Posterior cingulate gyrus (tissue), 11 donors: ENCODE measurements at regions of chr6 and their contacts with region 1.

Region 1: GRCh38 chr6:100116411-100117194 is 122.6 kb upstream of the MCHR2 start:
- DNase-seq: peak in 3 of 10 donors; percentile 41 to 47 (median 44)

Region 2: DNA sequence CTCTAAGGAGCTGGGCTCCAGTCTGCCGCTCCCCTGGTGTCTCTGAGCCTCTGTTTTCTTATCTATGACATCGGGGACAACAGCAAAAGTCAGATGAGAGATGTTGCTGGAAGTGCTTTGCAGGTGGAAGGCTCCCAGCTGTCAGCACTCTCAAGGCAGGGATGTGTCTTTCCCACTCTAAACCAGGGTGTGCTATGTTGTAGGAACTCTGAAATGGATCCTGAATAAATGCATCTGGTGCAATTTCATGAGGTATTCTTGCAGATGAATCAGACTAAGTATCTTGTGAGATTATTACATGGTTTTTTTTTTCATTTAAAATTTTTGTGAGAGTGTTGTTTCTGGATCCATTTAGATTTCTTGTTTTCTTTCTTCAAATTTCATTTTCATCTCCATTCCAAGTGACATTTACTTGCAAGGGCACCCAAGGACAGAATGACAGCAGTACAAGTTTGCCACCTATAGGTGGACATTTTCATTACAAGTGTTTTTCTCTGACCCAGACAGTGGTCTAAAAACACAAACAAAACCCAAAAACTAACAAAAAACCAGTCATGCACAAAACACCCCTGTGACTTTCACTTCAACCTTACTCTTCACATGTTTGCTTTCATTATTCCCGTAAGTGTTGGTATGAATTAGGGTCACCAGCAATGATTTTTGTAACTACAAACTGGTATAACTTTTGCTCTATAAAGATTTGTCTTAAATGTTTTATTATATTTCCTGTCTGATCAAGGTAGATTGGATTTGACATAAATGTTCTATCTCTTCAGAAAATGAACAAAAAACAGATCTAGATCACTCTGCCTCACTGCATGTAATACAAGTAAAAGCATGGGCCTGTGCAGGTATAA is 362.8 kb after region 1 on chr6:
- intact Hi-C with region 1: loop called (anchors 5 kb)
- DNase-seq: no peak

Region 3: DNA sequence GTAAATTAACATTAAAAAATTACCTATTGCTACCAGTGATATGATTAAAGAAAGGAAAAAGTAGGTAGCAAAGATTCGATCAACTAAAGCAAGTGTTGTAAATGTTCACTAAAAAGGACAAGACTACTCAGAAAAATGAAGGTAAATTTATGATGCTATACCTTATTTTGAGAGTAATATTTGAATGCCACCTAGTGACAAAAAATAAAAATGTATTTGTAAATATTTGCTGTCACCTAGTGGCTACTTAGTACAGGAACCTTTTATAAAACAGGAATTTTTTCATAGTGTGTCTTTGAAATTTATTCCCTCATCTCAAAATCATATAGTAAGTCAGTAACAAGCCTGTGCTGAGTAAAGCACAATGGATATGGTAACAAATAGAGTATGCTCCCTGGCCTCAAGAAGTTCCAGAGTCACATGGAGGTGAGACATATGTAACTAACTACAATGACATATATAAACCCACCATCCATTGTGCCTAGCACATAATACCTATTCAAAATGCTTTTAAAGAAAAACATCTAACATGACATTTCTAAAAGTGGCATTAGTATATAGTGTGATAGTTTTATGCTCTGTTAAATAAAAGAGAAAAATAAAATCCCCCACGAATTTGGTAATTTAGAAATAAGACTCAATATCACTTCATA is 541.2 kb after region 1 on chr6:
- intact Hi-C with region 1: loop called (anchors 2 kb)
- DNase-seq: no peak

Region 4: DNA sequence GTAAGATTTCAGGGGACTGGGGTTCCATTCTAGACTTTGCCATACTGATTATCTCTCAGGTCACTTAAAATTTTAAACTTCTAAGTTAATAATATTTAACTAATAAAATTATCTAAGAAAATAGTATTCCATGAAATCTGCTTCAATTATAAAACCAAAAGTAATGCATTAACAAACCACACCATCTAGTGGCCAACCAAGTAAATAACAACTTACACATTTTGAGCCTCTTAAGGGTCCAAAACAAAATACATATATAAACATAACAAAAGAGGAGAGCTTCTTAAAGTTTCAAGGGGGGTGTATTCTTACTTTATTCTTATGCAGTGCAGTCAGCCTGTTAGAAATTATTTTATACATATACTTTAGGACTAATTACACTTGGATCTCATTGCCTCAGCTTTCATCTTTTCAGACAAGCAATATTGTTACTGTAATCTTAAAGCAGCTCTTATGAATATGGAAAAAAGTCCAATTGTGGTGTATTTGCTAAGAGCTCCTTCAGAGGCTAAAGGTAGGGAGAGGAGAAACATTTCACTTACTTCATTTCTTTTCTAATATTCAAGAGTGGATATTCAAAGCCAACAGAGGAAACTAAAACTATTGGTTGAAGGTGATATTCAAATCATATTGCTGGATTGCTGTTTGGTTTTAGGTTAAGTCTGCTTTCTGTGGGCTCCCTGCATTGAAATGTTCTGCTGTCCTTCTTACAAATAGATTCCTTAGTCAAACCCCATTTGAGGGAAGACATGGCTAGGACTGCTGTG is 547.9 kb after region 1 on chr6:
- intact Hi-C with region 1: loop called (anchors 1 kb)
- DNase-seq: no peak